ENCODE measurements at regions of chr3 and their contacts with region 1.

Region 1: DNA sequence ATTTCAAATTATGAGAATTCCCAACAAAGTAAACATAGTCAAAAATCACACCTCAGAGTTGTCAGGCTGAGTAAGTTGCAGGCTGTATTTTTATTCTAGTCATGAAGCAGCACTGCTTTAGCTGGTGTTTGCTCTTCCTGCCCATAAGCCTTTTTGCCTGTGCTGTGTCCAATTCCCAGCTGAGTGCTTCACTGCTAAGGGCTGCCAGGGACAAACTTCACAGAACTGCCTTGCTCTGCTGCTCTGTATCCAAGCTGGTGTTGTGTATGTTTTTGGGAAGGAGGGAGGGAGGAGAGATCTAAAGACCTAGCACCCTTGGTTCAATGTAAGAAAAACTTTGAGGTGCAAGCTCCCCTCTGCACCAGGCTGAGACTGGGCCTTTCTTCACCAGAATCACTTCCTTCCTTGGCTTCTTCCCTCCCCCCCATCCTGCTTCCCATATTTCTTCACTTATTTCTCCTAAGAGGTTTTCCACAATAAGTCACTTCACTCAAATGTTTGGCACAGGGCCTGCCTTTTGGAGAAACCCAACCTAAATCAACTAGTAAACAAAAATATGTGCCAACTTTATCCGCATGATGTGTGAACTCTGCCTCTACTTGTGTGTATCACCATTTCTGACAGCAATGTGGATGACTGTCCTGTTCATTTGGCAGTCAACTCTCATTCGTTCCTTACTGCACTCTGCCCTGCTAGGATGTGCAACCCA is 156.1 kb downstream of the TBL1XR1 start:
- DNase-seq: no peak
- H3K4me3 ChIP-seq: no peak overlapping the region
- H3K27ac ChIP-seq: peak overlapping the region; percentile 19 to 70 (median 56)
- H3K4me1 ChIP-seq: peaks cover 5 to 21% (median 14%) of the 10 kb centered on the region in 4 donors
- H3K27me3 ChIP-seq: no peaks in the 10 kb centered on the region
- CTCF ChIP-seq: no peak
- EP300 ChIP-seq: no peak
- POLR2A ChIP-seq: no peak

Region 2: DNA sequence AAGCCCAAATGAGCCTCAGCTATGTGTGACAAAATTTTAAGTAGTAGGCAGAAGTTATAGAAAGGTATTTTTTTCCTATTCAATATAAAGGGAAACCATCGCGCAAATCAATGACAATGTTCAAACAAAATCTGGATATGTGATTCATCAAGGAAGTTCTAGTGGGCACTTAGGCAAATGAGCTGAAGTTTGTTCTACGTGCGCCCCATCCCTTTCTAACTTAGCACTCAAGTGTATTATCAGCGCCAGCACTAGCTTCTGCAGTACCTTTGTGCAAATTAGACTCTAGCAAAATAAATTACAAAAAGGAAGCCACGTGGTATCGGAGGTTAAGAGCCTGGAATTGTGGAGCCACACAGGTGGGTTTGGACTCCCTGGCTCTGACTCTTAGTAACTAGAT is 65.0 kb after region 1 on chr3:
- in situ Hi-C with region 1: no loop called
- intact Hi-C with region 1: no loop called
- DNase-seq: no peak
- H3K4me3 ChIP-seq: no peak overlapping the region
- H3K27ac ChIP-seq: no peak overlapping the region
- H3K4me1 ChIP-seq: peaks cover 21 to 77% (median 34%) of the 10 kb centered on the region in 4 donors
- H3K27me3 ChIP-seq: no peaks in the 10 kb centered on the region
- CTCF ChIP-seq: no peak
- EP300 ChIP-seq: no peak
- POLR2A ChIP-seq: no peak

Region 3: GRCh38 chr3:177367788-177368187 is 326.6 kb after region 1 on chr3:
- in situ Hi-C with region 1: loop called in 1 of 4 experiments (anchors 5 kb)
- intact Hi-C with region 1: no loop called
- DNase-seq: no peak
- H3K4me3 ChIP-seq: no peak overlapping the region
- H3K27ac ChIP-seq: no peak overlapping the region
- H3K4me1 ChIP-seq: peaks cover 0 to 6% (median 4%) of the 10 kb centered on the region in 4 donors
- H3K27me3 ChIP-seq: no peaks in the 10 kb centered on the region
- CTCF ChIP-seq: no peak
- EP300 ChIP-seq: no peak
- POLR2A ChIP-seq: no peak

Region 4: GRCh38 chr3:177777699-177778098 is 736.5 kb after region 1 on chr3:
- in situ Hi-C with region 1: loop called in 1 of 4 experiments (anchors 25 kb)
- intact Hi-C with region 1: no loop called
- DNase-seq: peak; percentile 69
- H3K4me3 ChIP-seq: no peak overlapping the region
- H3K27ac ChIP-seq: no peak overlapping the region
- H3K4me1 ChIP-seq: peaks cover 0 to 20% (median 2%) of the 10 kb centered on the region in 4 donors
- H3K27me3 ChIP-seq: no peaks in the 10 kb centered on the region
- CTCF ChIP-seq: peak; percentile 55 to 79 (median 66)
- EP300 ChIP-seq: no peak
- POLR2A ChIP-seq: no peak

Region 5: GRCh38 chr3:178325330-178325729 is 1284.2 kb after region 1 on chr3:
- in situ Hi-C with region 1: loop called in 1 of 4 experiments (anchors 25 kb)
- intact Hi-C with region 1: no loop called
- DNase-seq: no peak
- H3K4me3 ChIP-seq: no peak overlapping the region
- H3K27ac ChIP-seq: no peak overlapping the region
- H3K4me1 ChIP-seq: peaks cover 3 to 21% (median 5%) of the 10 kb centered on the region in 4 donors
- H3K27me3 ChIP-seq: no peaks in the 10 kb centered on the region
- CTCF ChIP-seq: peak; percentile 31 to 50 (median 36)
- EP300 ChIP-seq: no peak
- POLR2A ChIP-seq: no peak

Measured in transverse colon (tissue), 4 donors.